GM12878 (cell line): ENCODE measurements at regions of chr1 and their contacts with region 1.

Region 1: GRCh38 chr1:81582467-81582986 is 218.2 kb upstream of the ADGRL2 start:
- DNase-seq: peak; percentile 21
- ATAC-seq: peak; percentile 88
- H3K4me3 ChIP-seq: no peak overlapping the region
- H3K27ac ChIP-seq: no peak overlapping the region
- H3K4me1 ChIP-seq: no peaks in the 10 kb centered on the region
- H3K27me3 ChIP-seq: peaks cover 0 to 3% of the 10 kb centered on the region in 2 experiments; a peak in 2 of 4 replicates
- CTCF ChIP-seq: no peak
- EP300 ChIP-seq: peak in 1 of 2 experiments; percentile 66; a peak in 3 of 4 replicates
- POLR2A ChIP-seq: no peak
- RAD21 ChIP-seq: no peak

Region 2: DNA sequence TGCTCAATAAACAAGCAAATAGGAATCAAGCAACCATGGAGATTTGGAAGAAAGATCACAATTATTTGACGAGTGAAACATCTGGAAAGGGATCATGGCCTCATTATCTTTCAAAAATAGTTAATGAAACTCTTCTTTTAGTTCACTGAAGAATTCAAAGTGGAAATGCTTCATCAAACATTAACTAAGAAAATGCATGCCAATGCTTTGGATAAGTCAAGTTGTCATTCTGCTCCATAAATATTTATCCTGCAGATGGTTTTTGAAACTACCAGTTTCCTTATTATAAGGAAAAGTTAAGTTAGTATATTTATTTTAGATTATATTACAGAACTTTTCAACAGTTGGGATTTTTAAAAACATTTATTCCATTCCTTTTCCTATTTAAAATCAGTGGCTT is 11.7 kb after region 1 on chr1:
- CTCF ChIA-PET with region 1: interaction called, 15 read pairs
- POLR2A ChIA-PET with region 1: interaction called, 11 read pairs
- RAD21 ChIA-PET with region 1: interaction called, 11 read pairs
- SMC1A ChIA-PET with region 1: interaction called, 95 read pairs
- in situ Hi-C with region 1: no loop called
- intact Hi-C with region 1: no loop called
- DNase-seq: no peak
- ATAC-seq: no peak
- H3K4me3 ChIP-seq: no peak overlapping the region
- H3K27ac ChIP-seq: no peak overlapping the region
- H3K4me1 ChIP-seq: peaks cover 9% of the 10 kb centered on the region
- H3K27me3 ChIP-seq: no peaks in the 10 kb centered on the region
- CTCF ChIP-seq: no peak
- EP300 ChIP-seq: no peak
- POLR2A ChIP-seq: no peak
- RAD21 ChIP-seq: no peak

Region 3: DNA sequence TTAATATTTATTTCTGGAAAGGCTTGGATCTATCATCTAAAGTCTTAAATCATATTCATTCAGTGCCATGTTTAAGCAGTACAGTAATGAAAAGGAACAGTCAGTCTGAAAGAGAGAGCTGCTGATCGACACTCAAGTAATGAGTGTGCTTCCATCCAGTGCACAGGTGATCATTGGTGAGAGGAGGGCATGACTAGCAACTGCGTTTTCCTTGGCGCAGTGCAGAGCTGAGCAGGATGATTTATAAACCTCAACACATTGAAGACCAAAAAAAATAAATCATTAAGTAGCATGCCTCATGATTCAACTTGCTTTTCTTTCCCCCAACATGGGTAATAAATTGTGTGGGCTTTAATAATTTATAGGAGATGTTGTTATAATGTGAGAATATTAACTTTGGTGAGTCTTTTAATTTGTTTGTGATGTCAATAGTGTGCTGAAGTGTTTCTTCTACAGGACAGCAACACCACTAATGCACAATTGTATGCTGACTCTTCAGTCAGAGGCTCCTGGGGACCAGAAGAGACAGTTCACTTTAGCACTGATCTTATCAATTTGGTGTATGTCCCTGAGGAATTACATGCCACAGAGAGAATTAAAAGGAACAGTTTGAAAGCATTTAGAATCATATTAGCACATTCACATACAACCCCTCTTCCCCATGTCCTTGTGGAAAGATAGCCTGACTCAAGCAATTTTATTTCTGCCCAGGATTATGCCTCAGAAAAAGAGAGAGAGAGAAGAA is 18.5 kb after region 1 on chr1:
- CTCF ChIA-PET with region 1: interaction called, 15 read pairs
- POLR2A ChIA-PET with region 1: interaction called, 11 read pairs
- RAD21 ChIA-PET with region 1: interaction called, 19 read pairs
- SMC1A ChIA-PET with region 1: interaction called, 95 read pairs
- in situ Hi-C with region 1: no loop called
- intact Hi-C with region 1: no loop called
- DNase-seq: no peak
- ATAC-seq: peak; percentile 71
- H3K4me3 ChIP-seq: no peak overlapping the region
- H3K27ac ChIP-seq: no peak overlapping the region; the same call in 1 of the 2 replicates
- H3K4me1 ChIP-seq: peaks cover 9% of the 10 kb centered on the region
- H3K27me3 ChIP-seq: no peaks in the 10 kb centered on the region
- CTCF ChIP-seq: no peak
- EP300 ChIP-seq: peak; percentile 42 to 72; a peak in 2 of 4 replicates
- POLR2A ChIP-seq: no peak
- RAD21 ChIP-seq: no peak

Region 4: GRCh38 chr1:81606656-81607055 is 24.1 kb after region 1 on chr1:
- CTCF ChIA-PET with region 1: interaction called, 3 read pairs
- POLR2A ChIA-PET with region 1: interaction called, 4 read pairs
- RAD21 ChIA-PET with region 1: interaction called, 19 read pairs
- SMC1A ChIA-PET with region 1: interaction called, 66 read pairs
- in situ Hi-C with region 1: no loop called
- intact Hi-C with region 1: no loop called
- DNase-seq: no peak
- ATAC-seq: no peak
- H3K4me3 ChIP-seq: no peak overlapping the region
- H3K27ac ChIP-seq: no peak overlapping the region
- H3K4me1 ChIP-seq: no peaks in the 10 kb centered on the region
- H3K27me3 ChIP-seq: no peaks in the 10 kb centered on the region
- CTCF ChIP-seq: no peak
- EP300 ChIP-seq: no peak
- POLR2A ChIP-seq: no peak
- RAD21 ChIP-seq: no peak